Pancreas (tissue), 10 donors: ENCODE measurements at regions of chr9 and their contacts with region 1.

Region 1: DNA sequence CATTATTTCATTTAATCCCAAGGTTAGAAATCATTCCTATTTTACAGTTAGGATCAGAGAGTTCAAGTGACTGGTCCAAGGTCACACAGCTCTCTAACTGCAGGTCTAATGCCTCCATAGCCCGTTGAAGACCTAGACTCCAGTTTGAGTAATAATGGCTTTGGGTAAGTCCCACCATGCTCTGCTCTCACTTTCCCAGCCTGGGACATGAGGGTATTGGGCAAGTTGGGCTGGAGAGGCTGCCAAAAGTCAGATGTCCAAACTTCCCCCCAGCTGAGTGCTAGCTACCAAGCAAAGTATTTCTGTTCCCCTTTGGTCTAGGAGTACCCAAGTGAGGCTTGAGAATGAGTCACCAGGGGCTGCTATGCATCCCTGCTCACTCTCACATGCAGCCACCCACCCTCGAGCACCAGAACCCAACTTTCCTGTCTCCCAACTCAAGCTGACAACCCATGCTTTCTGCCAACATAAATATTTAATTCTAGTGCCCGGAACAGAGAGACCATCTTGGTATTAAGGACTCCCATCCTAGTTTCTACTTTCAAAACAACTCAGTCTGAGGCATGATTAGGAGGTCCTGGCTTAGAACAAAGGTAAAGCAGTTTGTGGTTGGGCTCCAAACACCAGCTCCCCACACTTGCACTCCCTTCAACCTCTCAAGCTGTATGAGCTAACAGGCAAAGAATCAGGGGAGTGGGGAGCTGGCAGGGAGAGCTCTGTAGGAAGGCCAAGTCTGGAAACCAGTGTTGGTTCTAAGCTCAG is 236.5 kb upstream of the TRIM32 start:
- DNase-seq: peak in 1 of 6 donors; percentile 50
- ATAC-seq: peak in 3 of 4 donors; percentile 57 to 77 (median 67)
- H3K4me3 ChIP-seq: no peak overlapping the region
- H3K27ac ChIP-seq: no peak overlapping the region
- H3K4me1 ChIP-seq: peaks cover 0 to 5% (median 3%) of the 10 kb centered on the region in 3 donors
- H3K27me3 ChIP-seq: no peaks in the 10 kb centered on the region
- CTCF ChIP-seq: no peak

Region 2: GRCh38 chr9:115864581-115864980 is 586.0 kb before region 1 on chr9:
- intact Hi-C with region 1: no loop called
- DNase-seq: no peak
- ATAC-seq: no peak
- H3K4me3 ChIP-seq: no peak overlapping the region
- H3K27ac ChIP-seq: no peak overlapping the region
- H3K4me1 ChIP-seq: no peaks in the 10 kb centered on the region
- H3K27me3 ChIP-seq: peaks cover 0 to 4% (median 0%) of the 10 kb centered on the region in 4 donors
- CTCF ChIP-seq: no peak

Region 3: DNA sequence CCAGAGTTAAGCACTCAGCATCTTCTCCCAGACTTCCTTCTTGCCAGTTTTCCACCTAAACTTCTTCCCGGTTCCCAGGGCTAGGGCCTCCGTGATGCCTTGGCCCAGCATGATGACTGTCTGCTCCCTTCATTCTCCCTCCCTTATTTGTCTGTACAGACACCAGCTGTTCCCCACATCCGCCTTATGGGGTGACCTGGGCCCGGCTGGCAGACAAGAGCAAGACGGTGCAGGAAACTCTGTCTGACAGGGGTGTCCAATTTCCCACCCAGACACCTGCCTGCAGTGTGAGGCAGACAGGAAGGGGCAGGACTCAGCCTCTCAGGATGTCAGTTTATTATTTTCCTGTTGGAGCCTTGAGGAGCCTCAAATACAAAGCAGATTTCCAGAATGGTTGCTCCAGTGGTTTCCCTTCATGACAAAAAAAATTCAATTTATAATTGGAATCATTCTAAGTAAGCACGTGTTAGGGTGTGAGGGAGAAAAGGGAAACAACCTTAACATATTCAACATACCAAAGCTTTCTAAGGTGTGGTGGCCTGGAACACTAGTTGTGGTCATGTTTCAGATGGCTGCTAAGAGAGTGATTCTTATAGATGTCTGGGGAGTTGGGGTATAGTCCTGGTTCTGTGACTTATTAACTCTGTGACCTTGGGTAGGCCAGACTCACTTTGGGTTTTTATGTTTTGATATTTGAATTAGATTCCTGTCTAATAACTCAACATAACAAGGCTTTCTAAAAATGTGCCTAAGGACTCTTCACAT is 62.4 kb before region 1 on chr9:
- intact Hi-C with region 1: loop called in 1 of 3 experiments (anchors 10 kb)
- DNase-seq: no peak
- ATAC-seq: no peak
- H3K4me3 ChIP-seq: no peak overlapping the region
- H3K27ac ChIP-seq: no peak overlapping the region
- H3K4me1 ChIP-seq: no peaks in the 10 kb centered on the region
- H3K27me3 ChIP-seq: no peaks in the 10 kb centered on the region
- CTCF ChIP-seq: no peak

Region 4: GRCh38 chr9:116494815-116495634 is 44.5 kb after region 1 on chr9:
- intact Hi-C with region 1: loop called in 1 of 3 experiments (anchors 5 kb)
- DNase-seq: peak in 5 of 6 donors; percentile 19 to 74 (median 54)
- ATAC-seq: peak; percentile 73 to 91 (median 82)
- H3K4me3 ChIP-seq: no peak overlapping the region
- H3K27ac ChIP-seq: no peak overlapping the region
- H3K4me1 ChIP-seq: peaks cover 0 to 13% (median 0%) of the 10 kb centered on the region in 3 donors
- H3K27me3 ChIP-seq: no peaks in the 10 kb centered on the region
- CTCF ChIP-seq: peak; percentile 59 to 71 (median 62)